ENCODE measurements at regions of chr1 and their contacts with region 1.

Region 1: DNA sequence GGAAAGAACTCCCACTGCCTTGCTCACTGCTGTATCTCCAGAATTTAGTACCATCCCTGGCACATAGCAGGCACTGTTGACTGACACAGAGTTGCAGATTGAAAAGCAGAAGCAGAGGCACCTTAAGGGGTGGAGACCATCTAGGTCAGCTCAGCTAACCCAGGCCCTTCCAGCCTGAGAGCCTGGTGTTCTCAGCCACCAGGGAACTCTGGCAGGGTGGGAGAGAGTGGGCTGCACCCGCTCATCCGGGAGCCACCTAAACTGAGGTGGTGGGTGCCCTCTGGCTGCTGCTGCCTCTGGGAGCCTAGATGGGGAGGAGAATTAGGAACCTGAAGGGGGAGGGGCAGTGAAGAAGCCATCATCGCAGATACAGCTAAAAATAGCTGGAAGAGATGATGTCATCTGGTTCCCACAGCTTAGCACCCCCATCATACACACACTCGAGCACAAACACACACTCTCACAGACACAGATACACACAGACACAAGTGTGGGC is 1.5 kb upstream of the TSPAN1 start:
- DNase-seq: peak in 40 of 42 donors; percentile 27 to 88 (median 62)

Region 2: GRCh38 chr1:45924736-45925135 is 248.7 kb before region 1 on chr1:
- intact Hi-C with region 1: no loop called
- DNase-seq: no peak

Region 3: GRCh38 chr1:46134660-46135331 is 38.6 kb before region 1 on chr1:
- intact Hi-C with region 1: loop called (anchors 5 kb)
- DNase-seq: no peak

Region 4: GRCh38 chr1:46784666-46785065 is 611.3 kb after region 1 on chr1:
- intact Hi-C with region 1: no loop called
- DNase-seq: no peak